ENCODE measurements at regions of chr6 and their contacts with region 1.

Region 1: DNA sequence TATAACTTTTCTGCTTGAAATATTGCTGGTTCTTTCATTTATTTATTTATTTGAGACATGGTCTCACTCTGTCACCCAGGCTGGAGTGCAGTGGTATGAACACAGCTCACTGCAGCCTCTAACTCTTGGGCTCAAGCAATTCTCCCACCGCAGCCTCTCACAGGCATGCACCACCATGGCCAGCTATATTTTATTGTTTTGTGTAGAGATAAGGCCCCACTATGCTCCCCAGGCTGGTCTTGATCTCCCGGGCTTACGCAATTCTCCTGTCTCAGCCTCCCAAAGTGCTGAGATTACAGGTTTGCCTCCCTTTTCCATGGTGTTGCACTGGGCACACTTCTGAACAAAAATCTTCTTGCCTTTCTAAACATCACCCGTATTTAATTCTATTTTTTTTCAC is 39.1 kb upstream of the RNGTT start:
- DNase-seq: no peak
- ATAC-seq: no peak
- H3K4me3 ChIP-seq: no peak overlapping the region
- H3K27ac ChIP-seq: no peak overlapping the region
- H3K4me1 ChIP-seq: no peaks in the 10 kb centered on the region; a peak in 1 of 5 replicates
- H3K27me3 ChIP-seq: 0 out of 5 replicates have a peak, but pooled peaks cover 0 to 2% of the 10 kb centered on the region in 2 experiments
- CTCF ChIP-seq: no peak
- EP300 ChIP-seq: no peak
- POLR2A ChIP-seq: no peak
- RAD21 ChIP-seq: no peak

Region 2: GRCh38 chr6:89080542-89081422 is 78.3 kb after region 1 on chr6 and contains the start of gene PNRC1:
- CTCF ChIA-PET with region 1: no interaction called
- POLR2A ChIA-PET with region 1: interaction called, 4 read pairs
- in situ Hi-C with region 1: no loop called
- intact Hi-C with region 1: loop called (anchors 5 kb)
- DNase-seq: peak; percentile 93 to 98 (median 95)
- ATAC-seq: peak; percentile 90
- H3K4me3 ChIP-seq: peak within 1 kb of the TSS; percentile 86
- H3K27ac ChIP-seq: peak within 1 kb of the TSS; percentile 88
- H3K4me1 ChIP-seq: peaks cover 15 to 16% of the 10 kb centered on the region in 2 experiments; a peak in 4 of 5 replicates
- H3K27me3 ChIP-seq: no peaks in the 10 kb centered on the region
- CTCF ChIP-seq: peak in 2 of 3 experiments; percentile 5 to 6; a peak in 1 of 6 replicates
- EP300 ChIP-seq: peak; percentile 28; the same call in 1 of the 2 replicates
- POLR2A ChIP-seq: peak; percentile 89
- RAD21 ChIP-seq: no peak
- polyA plus RNA-seq, gene PNRC1: 1.2 to 1.8 TPM